Esophagus muscularis mucosa (tissue), 4 donors: ENCODE measurements at regions of chr1 and their contacts with region 1.

Region 1: GRCh38 chr1:39258146-39258924 is 53.8 kb downstream of the MACF1 start:
- DNase-seq: peak; percentile 96
- H3K4me3 ChIP-seq: no peak overlapping the region
- H3K27ac ChIP-seq: peak overlapping the region; percentile 59 to 74 (median 70)
- H3K4me1 ChIP-seq: peaks cover 30 to 59% (median 57%) of the 10 kb centered on the region in 4 donors
- H3K27me3 ChIP-seq: no peaks in the 10 kb centered on the region
- CTCF ChIP-seq: peak; percentile 89 to 91 (median 89)
- EP300 ChIP-seq: no peak
- POLR2A ChIP-seq: no peak

Region 2: GRCh38 chr1:39196244-39197215 is 61.8 kb before region 1 on chr1:
- intact Hi-C with region 1: loop called (anchors 2 kb)
- DNase-seq: no peak
- H3K4me3 ChIP-seq: no peak overlapping the region
- H3K27ac ChIP-seq: peak overlapping the region; percentile 90 to 94 (median 92)
- H3K4me1 ChIP-seq: peaks cover 35 to 88% (median 80%) of the 10 kb centered on the region in 4 donors
- H3K27me3 ChIP-seq: no peaks in the 10 kb centered on the region
- CTCF ChIP-seq: no peak
- EP300 ChIP-seq: no peak
- POLR2A ChIP-seq: no peak